ENCODE measurements at regions of chr5 and their contacts with region 1.

Region 1: DNA sequence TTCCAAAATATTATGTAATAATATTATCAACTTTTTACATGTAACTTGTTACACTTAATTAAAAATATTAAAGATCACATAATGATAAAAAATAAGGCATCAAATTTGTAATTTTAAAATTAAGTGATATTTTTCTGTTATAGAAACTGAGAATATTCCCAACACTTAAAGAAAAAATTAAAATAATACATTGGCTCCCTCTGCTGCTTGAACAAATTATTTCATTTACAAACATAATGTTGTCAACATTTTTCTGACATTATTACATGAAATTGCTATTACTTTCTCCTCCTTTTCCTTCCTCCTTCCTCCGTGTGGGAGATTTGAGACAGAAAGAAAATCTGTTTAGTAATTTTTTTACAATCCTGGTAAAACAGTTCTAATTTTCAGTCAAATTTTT is 42.3 kb downstream of the RNF180 start:
- DNase-seq: no peak
- ATAC-seq: no peak
- H3K4me3 ChIP-seq: no peak overlapping the region
- H3K27ac ChIP-seq: no peak overlapping the region
- H3K4me1 ChIP-seq: no peaks in the 10 kb centered on the region
- H3K27me3 ChIP-seq: no peaks in the 10 kb centered on the region
- CTCF ChIP-seq: no peak; a peak in 1 of 6 replicates
- EP300 ChIP-seq: no peak
- POLR2A ChIP-seq: no peak
- RAD21 ChIP-seq: no peak

Region 2: GRCh38 chr5:63401436-63402046 is 806.4 kb before region 1 on chr5:
- CTCF ChIA-PET with region 1: no interaction called
- POLR2A ChIA-PET with region 1: no interaction called
- RAD21 ChIA-PET with region 1: no interaction called
- SMC1A ChIA-PET with region 1: no interaction called
- in situ Hi-C with region 1: no loop called
- intact Hi-C with region 1: loop called (anchors 5 kb)
- DNase-seq: peak; percentile 1
- ATAC-seq: peak; percentile 95
- H3K4me3 ChIP-seq: no peak overlapping the region
- H3K27ac ChIP-seq: no peak overlapping the region
- H3K4me1 ChIP-seq: no peaks in the 10 kb centered on the region
- H3K27me3 ChIP-seq: no peaks in the 10 kb centered on the region
- CTCF ChIP-seq: peak; percentile 64 to 76 (median 76)
- EP300 ChIP-seq: no peak
- POLR2A ChIP-seq: no peak
- RAD21 ChIP-seq: peak; percentile 87

Region 3: DNA sequence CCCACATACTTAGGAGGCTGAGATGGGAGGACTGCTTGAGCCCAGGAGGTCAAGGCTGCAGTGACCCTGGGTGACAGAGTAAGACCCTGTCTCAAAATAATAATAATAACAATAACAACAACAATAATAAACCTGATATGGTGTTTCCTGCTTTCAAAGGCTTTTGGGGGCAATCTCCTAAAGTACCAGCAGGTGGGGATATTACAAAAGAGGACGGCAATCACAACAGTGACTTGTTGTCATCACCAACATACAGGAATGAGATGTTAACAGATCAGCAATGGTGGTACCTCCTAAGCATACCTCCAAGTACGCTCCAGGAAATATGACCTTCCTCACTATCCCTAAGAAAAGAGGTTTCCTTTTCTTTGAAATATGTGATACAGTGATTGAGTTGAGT is 133.4 kb before region 1 on chr5:
- CTCF ChIA-PET with region 1: no interaction called
- POLR2A ChIA-PET with region 1: no interaction called
- RAD21 ChIA-PET with region 1: no interaction called
- SMC1A ChIA-PET with region 1: no interaction called
- in situ Hi-C with region 1: no loop called
- intact Hi-C with region 1: loop called (anchors 2 kb)
- DNase-seq: no peak
- ATAC-seq: peak; percentile 80
- H3K4me3 ChIP-seq: no peak overlapping the region
- H3K27ac ChIP-seq: no peak overlapping the region
- H3K4me1 ChIP-seq: no peaks in the 10 kb centered on the region
- H3K27me3 ChIP-seq: no peaks in the 10 kb centered on the region
- CTCF ChIP-seq: peak; percentile 46 to 60 (median 59); a peak in 5 of 6 replicates
- EP300 ChIP-seq: no peak
- POLR2A ChIP-seq: no peak
- RAD21 ChIP-seq: peak; percentile 53

Region 4: DNA sequence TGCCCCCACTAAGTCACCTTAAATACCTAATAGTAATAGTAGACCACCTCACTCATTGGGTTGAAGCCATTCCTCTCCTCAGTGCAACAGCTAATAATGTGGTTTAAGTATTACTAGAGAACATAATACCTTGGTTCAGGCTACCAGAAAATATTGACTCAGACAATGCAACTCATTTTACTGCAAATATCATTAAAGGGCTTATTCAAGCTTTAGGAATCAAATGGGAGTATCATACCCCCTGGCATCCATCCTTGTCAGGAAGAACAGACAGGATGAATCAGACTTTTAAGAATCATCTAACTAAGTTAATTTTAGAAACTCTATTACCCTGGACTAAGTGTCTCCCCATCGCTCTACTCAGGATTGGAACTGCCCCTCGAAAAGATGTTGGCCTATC is 49.2 kb before region 1 on chr5:
- CTCF ChIA-PET with region 1: interaction called, 4 read pairs
- POLR2A ChIA-PET with region 1: interaction called, 3 read pairs
- RAD21 ChIA-PET with region 1: interaction called, 6 read pairs
- SMC1A ChIA-PET with region 1: interaction called, 11 read pairs
- in situ Hi-C with region 1: loop called (anchors 5 kb)
- intact Hi-C with region 1: no loop called
- DNase-seq: no peak
- ATAC-seq: no peak
- H3K4me3 ChIP-seq: no peak overlapping the region
- H3K27ac ChIP-seq: no peak overlapping the region
- H3K4me1 ChIP-seq: no peaks in the 10 kb centered on the region
- H3K27me3 ChIP-seq: 0 out of 4 replicates have a peak, but pooled peaks cover 0 to 2% of the 10 kb centered on the region in 2 experiments
- CTCF ChIP-seq: no peak
- EP300 ChIP-seq: no peak
- POLR2A ChIP-seq: no peak
- RAD21 ChIP-seq: no peak

Region 5: DNA sequence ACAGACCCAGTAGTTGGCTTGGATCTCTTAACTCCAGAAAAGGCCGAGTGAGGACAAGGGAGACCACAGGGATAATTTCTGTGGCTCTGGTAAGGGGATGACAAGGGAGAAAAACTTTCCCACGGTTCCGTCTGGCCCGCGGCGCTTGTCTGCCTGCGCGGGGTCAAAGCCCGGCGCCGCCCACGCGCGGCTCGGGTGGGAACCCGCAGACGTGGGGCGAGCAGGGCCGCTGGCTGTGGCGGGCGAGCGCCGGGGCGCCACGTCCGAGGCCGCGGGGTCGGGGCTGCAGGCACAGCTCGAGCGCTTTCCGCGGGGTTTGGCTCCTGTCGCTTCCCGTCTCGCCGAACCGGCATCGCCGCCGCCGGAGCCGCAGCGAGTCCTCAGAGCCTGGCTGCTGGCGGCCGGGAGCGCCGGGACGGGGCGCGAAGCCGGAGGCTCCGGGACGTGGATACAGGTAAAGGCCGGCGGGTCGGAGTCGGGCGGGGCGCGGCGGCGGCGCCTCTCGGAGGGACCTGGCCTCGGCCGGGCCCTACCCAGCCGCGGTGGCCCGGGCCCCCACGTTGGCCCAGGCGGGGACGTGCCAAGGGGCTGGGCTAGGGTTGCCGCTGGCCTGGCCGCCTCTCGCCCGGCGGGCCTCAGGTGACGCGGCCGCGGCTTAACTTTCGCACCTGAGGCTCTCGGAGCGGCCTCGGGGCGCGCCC is 42.3 kb before region 1 on chr5 and contains the start of gene RNF180:
- CTCF ChIA-PET with region 1: interaction called, 17 read pairs
- POLR2A ChIA-PET with region 1: interaction called, 5 read pairs
- RAD21 ChIA-PET with region 1: interaction called, 5 read pairs
- SMC1A ChIA-PET with region 1: interaction called, 15 read pairs
- in situ Hi-C with region 1: no loop called
- intact Hi-C with region 1: no loop called
- DNase-seq: no peak
- ATAC-seq: peak; percentile 21
- H3K4me3 ChIP-seq: no peak within 1 kb of the TSS
- H3K27ac ChIP-seq: no peak within 1 kb of the TSS
- H3K4me1 ChIP-seq: no peaks in the 10 kb centered on the region
- H3K27me3 ChIP-seq: peaks cover 0 to 13% of the 10 kb centered on the region in 2 experiments
- CTCF ChIP-seq: no peak
- EP300 ChIP-seq: no peak
- POLR2A ChIP-seq: no peak
- RAD21 ChIP-seq: no peak
- polyA plus RNA-seq, gene RNF180: 0.16 to 0.20 TPM

Region 6: GRCh38 chr5:64180661-64181343 is 27.2 kb before region 1 on chr5:
- CTCF ChIA-PET with region 1: interaction called, 5 read pairs
- POLR2A ChIA-PET with region 1: interaction called, 8 read pairs
- RAD21 ChIA-PET with region 1: interaction called, 10 read pairs
- SMC1A ChIA-PET with region 1: interaction called, 21 read pairs
- in situ Hi-C with region 1: no loop called
- intact Hi-C with region 1: no loop called
- DNase-seq: no peak
- ATAC-seq: peak; percentile 24
- H3K4me3 ChIP-seq: no peak overlapping the region
- H3K27ac ChIP-seq: no peak overlapping the region
- H3K4me1 ChIP-seq: no peaks in the 10 kb centered on the region
- H3K27me3 ChIP-seq: no peaks in the 10 kb centered on the region
- CTCF ChIP-seq: no peak
- EP300 ChIP-seq: no peak
- POLR2A ChIP-seq: no peak
- RAD21 ChIP-seq: no peak